ENCODE measurements at regions of chr14 and their contacts with region 1.

Region 1: GRCh38 chr14:20413045-20413799 is at the start of gene TEP1:
- DNase-seq: peak; percentile 87
- ATAC-seq: peak; percentile 82
- H3K4me3 Mint-ChIP-seq: peak within 1 kb of the TSS; percentile 82
- H3K27ac Mint-ChIP-seq: peak within 1 kb of the TSS; percentile 94
- H3K4me1 Mint-ChIP-seq: peaks cover 37% of the 10 kb centered on the region
- H3K27me3 Mint-ChIP-seq: no peaks in the 10 kb centered on the region
- total RNA-seq, gene TEP1: 29.2 to 40.1 TPM

Region 2: DNA sequence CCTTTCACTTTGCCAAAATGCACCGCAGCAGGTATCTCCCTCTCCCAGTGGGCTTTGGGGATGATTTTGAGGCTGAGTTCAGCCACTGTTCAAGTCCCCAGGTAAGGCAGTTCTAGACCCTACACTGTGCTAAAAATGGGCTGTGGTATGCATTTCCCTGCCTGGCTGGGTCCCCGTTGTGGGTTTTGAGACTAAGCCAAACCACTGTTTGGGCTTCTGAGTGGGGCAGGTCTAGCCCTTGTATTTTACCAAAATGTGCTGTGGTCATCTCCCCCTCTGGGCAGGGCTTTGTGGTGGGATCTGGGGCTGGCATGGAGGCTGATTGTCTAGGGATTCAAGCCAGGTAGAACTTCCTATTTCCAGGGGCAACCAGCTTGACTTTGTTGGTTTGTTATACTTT is 683.5 kb before region 1 on chr14:
- CTCF ChIA-PET with region 1: no interaction called
- POLR2A ChIA-PET with region 1: no interaction called
- intact Hi-C with region 1: no loop called
- DNase-seq: no peak
- ATAC-seq: no peak
- H3K4me3 Mint-ChIP-seq: no peak overlapping the region
- H3K27ac Mint-ChIP-seq: no peak overlapping the region
- H3K4me1 Mint-ChIP-seq: no peaks in the 10 kb centered on the region
- H3K27me3 Mint-ChIP-seq: no peaks in the 10 kb centered on the region

Region 3: GRCh38 chr14:20332788-20333493 is 80.3 kb before region 1 on chr14 and contains the start of gene CCNB1IP1:
- CTCF ChIA-PET with region 1: interaction called, 19 read pairs
- POLR2A ChIA-PET with region 1: no interaction called
- intact Hi-C with region 1: loop called in 1 of 2 experiments (anchors 2 kb)
- DNase-seq: peak; percentile 59
- ATAC-seq: peak; percentile 99
- H3K4me3 Mint-ChIP-seq: peak within 1 kb of the TSS; percentile 98
- H3K27ac Mint-ChIP-seq: peak within 1 kb of the TSS; percentile 95
- H3K4me1 Mint-ChIP-seq: peaks cover 35% of the 10 kb centered on the region
- H3K27me3 Mint-ChIP-seq: no peaks in the 10 kb centered on the region
- total RNA-seq, gene CCNB1IP1: 57.4 to 67.0 TPM

Region 4: DNA sequence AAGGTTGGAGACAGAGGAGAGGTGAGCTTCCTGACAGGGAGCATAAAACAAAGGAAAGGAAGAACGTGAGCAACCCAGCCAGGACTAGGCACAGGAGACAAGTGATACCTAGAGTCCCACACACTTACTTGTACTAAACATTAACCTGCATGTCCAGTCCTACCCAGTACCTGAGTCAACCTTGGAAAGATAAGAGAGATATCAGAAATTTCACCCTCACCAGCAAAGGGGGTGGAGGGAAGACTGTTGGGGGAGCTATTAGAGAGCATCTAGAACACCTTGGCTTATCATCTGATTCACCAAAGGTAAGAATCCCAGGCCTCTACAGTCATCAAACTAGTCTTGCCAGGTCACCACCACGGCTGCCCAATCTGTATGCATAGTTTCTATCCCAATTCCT is 11.6 kb after region 1 on chr14:
- CTCF ChIA-PET with region 1: interaction called, 39 read pairs
- POLR2A ChIA-PET with region 1: no interaction called
- intact Hi-C with region 1: no loop called
- DNase-seq: no peak
- ATAC-seq: no peak
- H3K4me3 Mint-ChIP-seq: no peak overlapping the region
- H3K27ac Mint-ChIP-seq: no peak overlapping the region
- H3K4me1 Mint-ChIP-seq: peaks cover 28% of the 10 kb centered on the region
- H3K27me3 Mint-ChIP-seq: no peaks in the 10 kb centered on the region

Region 5: DNA sequence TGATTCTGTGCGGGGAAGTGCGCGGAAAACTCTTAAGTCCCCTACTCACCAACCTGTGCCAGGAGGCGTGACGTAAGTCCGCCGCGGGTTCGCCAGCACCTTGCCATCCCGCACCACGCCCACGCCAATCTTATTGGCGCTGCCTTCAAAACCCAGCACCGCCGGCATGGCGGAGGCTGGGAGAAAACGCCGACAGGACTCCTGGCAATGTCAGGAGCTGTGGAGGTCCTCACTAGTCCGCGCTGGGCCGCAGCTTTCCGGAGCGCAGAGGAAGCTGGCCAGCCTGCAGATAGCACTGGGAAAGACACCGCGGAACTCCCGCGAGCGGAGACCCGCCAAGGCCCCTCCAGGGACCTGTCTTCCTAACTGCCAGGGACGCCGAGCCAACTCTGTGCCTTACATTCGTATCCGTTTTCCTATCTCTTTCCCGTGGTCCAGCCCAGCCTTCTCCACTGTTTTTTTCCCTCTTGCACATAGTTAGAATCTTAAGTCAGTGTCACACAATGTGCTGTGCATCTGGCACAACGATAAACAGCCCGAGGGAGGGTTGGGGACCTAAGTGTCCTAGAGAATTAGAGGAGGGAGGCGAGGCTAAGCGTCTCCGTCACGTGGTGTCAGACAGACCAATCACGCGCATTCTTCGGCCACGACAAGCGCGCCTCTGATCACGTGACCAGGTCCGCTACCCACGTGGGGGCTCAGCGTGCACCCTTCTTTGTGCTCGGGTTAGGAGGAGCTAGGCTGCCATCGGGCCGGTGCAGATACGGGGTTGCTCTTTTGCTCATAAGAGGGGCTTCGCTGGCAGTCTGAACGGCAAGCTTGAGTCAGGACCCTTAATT is 41.5 kb after region 1 on chr14 and contains the starts of genes APEX1 and OSGEP:
- CTCF ChIA-PET with region 1: interaction called, 25 read pairs
- POLR2A ChIA-PET with region 1: interaction called, 6 read pairs
- intact Hi-C with region 1: loop called (anchors 1 to 2 kb)
- DNase-seq: peak; percentile 99
- ATAC-seq: peak; percentile 89
- H3K4me3 Mint-ChIP-seq: no peak within 1 kb of the TSS
- H3K27ac Mint-ChIP-seq: no peak within 1 kb of the TSS
- H3K4me1 Mint-ChIP-seq: peaks cover 18% of the 10 kb centered on the region
- H3K27me3 Mint-ChIP-seq: no peaks in the 10 kb centered on the region
- total RNA-seq, gene APEX1: 216 to 257 TPM
- total RNA-seq, gene OSGEP: 46.2 to 47.5 TPM

Region 6: GRCh38 chr14:20469242-20469889 is 56.1 kb after region 1 on chr14 and contains the start of gene PNP:
- CTCF ChIA-PET with region 1: interaction called, 4 read pairs
- POLR2A ChIA-PET with region 1: no interaction called
- intact Hi-C with region 1: loop called in 1 of 2 experiments (anchors 2 kb)
- DNase-seq: peak; percentile 93
- ATAC-seq: peak; percentile 93
- H3K4me3 Mint-ChIP-seq: peak within 1 kb of the TSS; percentile 91
- H3K27ac Mint-ChIP-seq: peak within 1 kb of the TSS; percentile 97
- H3K4me1 Mint-ChIP-seq: peaks cover 37% of the 10 kb centered on the region
- H3K27me3 Mint-ChIP-seq: no peaks in the 10 kb centered on the region
- total RNA-seq, gene PNP: 160 to 164 TPM